Heart right ventricle (tissue), 16 donors: ENCODE measurements at regions of chr17 and their contacts with region 1.

Region 1: DNA sequence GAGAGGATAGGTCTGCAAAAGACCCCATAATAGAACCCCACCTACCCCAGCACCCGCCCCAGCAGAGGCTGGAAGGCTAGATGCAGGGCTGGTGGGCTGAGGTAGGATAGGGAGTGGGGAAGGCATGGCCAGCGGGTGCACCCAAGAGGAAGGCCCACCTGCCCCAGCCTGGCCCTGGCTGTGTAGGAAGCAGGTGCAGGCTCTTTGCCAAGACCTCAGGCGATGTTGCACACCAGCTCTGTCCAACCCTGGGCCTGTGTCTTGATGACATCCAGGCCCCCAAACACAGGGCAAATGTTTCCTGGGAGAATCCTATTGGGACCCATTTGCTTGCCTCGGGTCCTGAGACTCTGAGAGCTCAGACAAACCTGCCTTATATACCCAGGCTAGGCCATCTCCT is 12.2 kb downstream of the UNC119 start:
- DNase-seq: no peak
- ATAC-seq: peak in 1 of 8 donors; percentile 9
- H3K4me3 ChIP-seq: no peak overlapping the region
- H3K27ac ChIP-seq: no peak overlapping the region
- H3K4me1 ChIP-seq: no peaks in the 10 kb centered on the region
- H3K27me3 ChIP-seq: no peaks in the 10 kb centered on the region
- CTCF ChIP-seq: no peak

Region 2: GRCh38 chr17:28467456-28468025 is 72.7 kb before region 1 on chr17:
- intact Hi-C with region 1: no loop called
- DNase-seq: no peak
- ATAC-seq: no peak
- H3K4me3 ChIP-seq: no peak overlapping the region
- H3K27ac ChIP-seq: no peak overlapping the region
- H3K4me1 ChIP-seq: peaks cover 0 to 26% (median 0%) of the 10 kb centered on the region in 9 donors
- H3K27me3 ChIP-seq: peaks cover 0 to 37% (median 19%) of the 10 kb centered on the region in 7 donors
- CTCF ChIP-seq: no peak

Region 3: DNA sequence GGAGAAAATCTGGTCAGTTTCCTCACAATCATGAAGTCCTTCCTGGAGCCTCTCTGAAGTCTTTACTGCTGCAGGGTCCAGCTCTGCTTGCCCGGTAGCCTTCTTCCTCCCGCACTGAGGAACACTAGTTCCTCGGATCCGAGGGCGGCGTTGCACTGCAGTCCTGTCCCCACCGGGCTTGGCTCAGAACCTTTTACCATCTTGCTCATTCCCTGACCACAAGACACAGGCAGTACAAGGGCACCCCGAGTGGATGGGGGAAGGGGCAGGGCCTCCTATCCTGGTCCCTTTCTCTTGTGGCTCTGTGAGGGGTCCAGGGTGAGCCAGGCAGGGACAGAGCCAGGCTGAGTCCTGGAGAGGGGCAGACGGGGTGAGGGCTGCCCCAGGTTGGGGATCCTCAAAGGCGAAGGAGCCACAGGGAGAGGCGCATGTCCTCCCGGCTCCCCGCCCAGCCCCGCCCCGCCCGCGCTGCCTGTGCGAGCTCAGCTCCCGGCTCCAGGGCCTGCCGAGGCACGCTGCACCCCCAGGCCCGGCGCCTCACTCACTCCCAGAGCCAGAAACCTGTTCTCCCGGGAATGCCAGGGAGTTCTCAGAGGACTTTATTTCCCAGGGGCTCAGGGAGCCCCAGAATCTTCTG is 32.5 kb before region 1 on chr17:
- intact Hi-C with region 1: no loop called
- DNase-seq: no peak
- ATAC-seq: no peak
- H3K4me3 ChIP-seq: no peak overlapping the region
- H3K27ac ChIP-seq: no peak overlapping the region
- H3K4me1 ChIP-seq: no peaks in the 10 kb centered on the region
- H3K27me3 ChIP-seq: peaks cover 0 to 82% (median 53%) of the 10 kb centered on the region in 7 donors
- CTCF ChIP-seq: no peak

Region 4: GRCh38 chr17:28612936-28613872 is 73.0 kb after region 1 on chr17:
- intact Hi-C with region 1: loop called in 5 of 10 experiments (anchors 5 kb)
- DNase-seq: peak in 1 of 2 donors; percentile 37
- ATAC-seq: peak in 6 of 8 donors; percentile 25 to 62 (median 44)
- H3K4me3 ChIP-seq: no peak overlapping the region
- H3K27ac ChIP-seq: no peak overlapping the region
- H3K4me1 ChIP-seq: no peaks in the 10 kb centered on the region
- H3K27me3 ChIP-seq: no peaks in the 10 kb centered on the region
- CTCF ChIP-seq: peak; percentile 43 to 77 (median 71)